Adrenal gland (tissue), 19 donors: ENCODE measurements at regions of chr4 and their contacts with region 1.

Region 1: GRCh38 chr4:163042306-163042705 is 124.4 kb downstream of the NAF1 start:
- DNase-seq: no peak
- H3K4me3 ChIP-seq: no peak overlapping the region
- H3K27ac ChIP-seq: no peak overlapping the region
- H3K4me1 ChIP-seq: no peaks in the 10 kb centered on the region
- H3K27me3 ChIP-seq: peaks cover 5% of the 10 kb centered on the region
- CTCF ChIP-seq: no peak
- POLR2A ChIP-seq: no peak

Region 2: GRCh38 chr4:162497564-162498167 is 544.6 kb before region 1 on chr4:
- intact Hi-C with region 1: loop called (anchors 10 kb)
- DNase-seq: peak in 2 of 7 donors; percentile 24 to 26
- H3K4me3 ChIP-seq: no peak overlapping the region
- H3K27ac ChIP-seq: no peak overlapping the region
- H3K4me1 ChIP-seq: no peaks in the 10 kb centered on the region
- H3K27me3 ChIP-seq: no peaks in the 10 kb centered on the region
- CTCF ChIP-seq: peak; percentile 79 to 94 (median 90)
- POLR2A ChIP-seq: no peak

Region 3: GRCh38 chr4:162506253-162506652 is 536.1 kb before region 1 on chr4:
- intact Hi-C with region 1: loop called in 1 of 2 experiments (anchors 10 kb)
- DNase-seq: no peak
- H3K4me3 ChIP-seq: no peak overlapping the region
- H3K27ac ChIP-seq: no peak overlapping the region
- H3K4me1 ChIP-seq: no peaks in the 10 kb centered on the region
- H3K27me3 ChIP-seq: no peaks in the 10 kb centered on the region
- CTCF ChIP-seq: no peak
- POLR2A ChIP-seq: no peak

Region 4: DNA sequence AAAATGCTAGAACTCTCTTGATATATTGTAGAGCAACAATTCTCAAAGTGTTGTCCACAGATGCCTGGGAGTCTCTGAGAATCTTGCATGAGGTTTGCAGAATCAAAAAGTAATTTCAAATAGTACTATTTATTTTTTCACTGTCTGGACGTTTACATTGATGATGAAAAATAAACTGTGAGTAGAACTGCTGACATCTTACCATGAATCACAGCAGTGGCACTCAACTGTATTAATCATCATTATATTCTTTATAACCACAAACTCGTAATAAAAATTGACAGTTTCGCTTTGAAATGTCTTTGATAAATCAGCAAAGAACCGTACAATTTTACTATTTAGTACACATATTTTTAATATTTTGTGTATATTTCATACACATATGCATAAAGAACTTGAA is 29.9 kb after region 1 on chr4:
- intact Hi-C with region 1: no loop called
- DNase-seq: no peak
- H3K4me3 ChIP-seq: no peak overlapping the region
- H3K27ac ChIP-seq: no peak overlapping the region
- H3K4me1 ChIP-seq: no peaks in the 10 kb centered on the region
- H3K27me3 ChIP-seq: no peaks in the 10 kb centered on the region
- CTCF ChIP-seq: no peak
- POLR2A ChIP-seq: no peak

Region 5: DNA sequence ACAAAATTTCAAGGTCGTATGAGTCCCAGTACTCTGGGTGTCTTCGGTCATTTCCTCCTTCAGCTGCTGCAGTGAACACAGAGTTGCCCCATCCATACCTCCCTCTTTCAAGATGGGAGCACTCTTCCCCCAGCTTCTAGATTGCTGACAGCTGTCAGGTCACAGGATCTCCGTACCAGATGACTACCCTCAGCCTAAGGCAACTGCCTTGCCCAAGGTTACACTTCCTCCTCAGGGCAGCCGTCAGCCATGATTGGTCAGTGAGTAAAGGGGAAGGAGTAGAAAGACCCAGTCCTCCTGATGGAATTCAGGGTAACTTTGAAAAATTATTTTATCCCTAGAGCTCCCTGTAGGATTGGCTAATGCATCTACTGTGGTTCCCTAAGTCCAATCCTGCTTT is 42.8 kb after region 1 on chr4:
- intact Hi-C with region 1: no loop called
- DNase-seq: no peak
- H3K4me3 ChIP-seq: no peak overlapping the region
- H3K27ac ChIP-seq: no peak overlapping the region
- H3K4me1 ChIP-seq: no peaks in the 10 kb centered on the region
- H3K27me3 ChIP-seq: no peaks in the 10 kb centered on the region
- CTCF ChIP-seq: no peak
- POLR2A ChIP-seq: no peak